HCT116 (cell line): ENCODE measurements at regions of chr12 and their contacts with region 1.

Region 1: GRCh38 chr12:47547085-47547484 is 158.7 kb downstream of the RPAP3 start:
- DNase-seq: no peak
- ATAC-seq: peak; percentile 82
- H3K4me3 ChIP-seq: no peak overlapping the region
- H3K27ac ChIP-seq: no peak overlapping the region
- H3K4me1 ChIP-seq: no peaks in the 10 kb centered on the region
- H3K27me3 ChIP-seq: no peaks in the 10 kb centered on the region
- CTCF ChIP-seq: peak; percentile 49 to 58 (median 57); a peak in 5 of 6 replicates
- POLR2A ChIP-seq: no peak
- RAD21 ChIP-seq: peak; percentile 64

Region 2: DNA sequence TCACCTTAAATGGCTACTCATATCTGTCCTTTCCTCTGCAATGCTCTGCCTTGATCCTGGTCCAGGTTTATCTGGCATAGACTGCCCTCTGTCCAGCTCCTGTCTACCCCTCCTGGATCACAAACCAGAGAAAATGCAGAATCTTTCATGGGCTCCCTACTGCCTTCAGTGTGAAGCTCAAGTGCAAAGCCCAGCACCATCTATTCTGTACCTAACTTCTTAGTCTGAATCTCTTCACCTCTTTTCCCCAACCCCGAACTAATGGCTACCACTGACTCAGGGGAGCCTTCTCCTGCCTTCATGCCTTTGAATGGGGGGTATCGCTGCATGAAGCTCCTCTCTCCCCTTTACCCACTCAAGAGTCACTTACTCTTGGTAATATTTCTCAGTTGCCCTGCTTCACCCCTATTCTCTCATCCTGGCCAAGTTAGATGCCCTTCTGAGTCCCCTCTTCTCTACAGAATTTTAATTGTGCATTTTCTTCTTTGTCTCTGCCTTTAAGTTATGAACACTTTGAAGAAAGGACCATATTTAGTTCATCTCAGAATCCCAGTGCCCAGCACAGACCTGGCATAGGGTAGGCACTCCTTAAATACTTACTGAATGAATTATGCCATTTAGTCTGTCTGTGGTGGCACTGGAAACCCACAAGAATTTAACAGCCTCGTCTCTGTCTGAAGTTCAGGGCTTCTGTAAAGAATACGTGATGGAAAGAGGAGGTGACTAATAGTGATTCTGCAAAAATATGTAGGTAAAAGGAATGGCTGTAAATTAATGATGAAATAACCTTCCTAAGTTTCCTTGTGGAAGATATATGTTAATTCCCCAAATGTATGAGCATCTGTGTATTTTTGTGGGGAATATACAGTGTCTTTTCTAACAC is 276.1 kb before region 1 on chr12:
- CTCF ChIA-PET with region 1: no interaction called
- POLR2A ChIA-PET with region 1: no interaction called
- RAD21 ChIA-PET with region 1: no interaction called
- intact Hi-C with region 1: no loop called
- DNase-seq: peak; percentile 84
- ATAC-seq: peak; percentile 95
- H3K4me3 ChIP-seq: peak overlapping the region in 1 of 2 experiments; percentile 1; a peak in 1 of 4 replicates
- H3K27ac ChIP-seq: peak overlapping the region; percentile 4; the same call in 1 of the 2 replicates
- H3K4me1 ChIP-seq: peaks cover 7 to 26% of the 10 kb centered on the region in 2 experiments
- H3K27me3 ChIP-seq: no peaks in the 10 kb centered on the region
- CTCF ChIP-seq: no peak
- POLR2A ChIP-seq: no peak
- RAD21 ChIP-seq: peak; percentile 30; the same call in 1 of the 2 replicates

Region 3: GRCh38 chr12:47527816-47528215 is 19.3 kb before region 1 on chr12:
- CTCF ChIA-PET with region 1: no interaction called
- POLR2A ChIA-PET with region 1: no interaction called
- RAD21 ChIA-PET with region 1: no interaction called
- intact Hi-C with region 1: loop called (anchors 2 kb)
- DNase-seq: no peak
- ATAC-seq: no peak
- H3K4me3 ChIP-seq: no peak overlapping the region
- H3K27ac ChIP-seq: no peak overlapping the region
- H3K4me1 ChIP-seq: no peaks in the 10 kb centered on the region
- H3K27me3 ChIP-seq: no peaks in the 10 kb centered on the region
- CTCF ChIP-seq: no peak
- POLR2A ChIP-seq: no peak
- RAD21 ChIP-seq: no peak

Region 4: GRCh38 chr12:47636908-47637780 is 90.1 kb after region 1 on chr12:
- CTCF ChIA-PET with region 1: interaction called, 20 read pairs
- POLR2A ChIA-PET with region 1: no interaction called
- RAD21 ChIA-PET with region 1: interaction called in 1 of 2 experiments, 3 read pairs
- intact Hi-C with region 1: no loop called
- DNase-seq: peak; percentile 69
- ATAC-seq: peak; percentile 98
- H3K4me3 ChIP-seq: no peak overlapping the region
- H3K27ac ChIP-seq: peak overlapping the region; percentile 52
- H3K4me1 ChIP-seq: peaks cover 7 to 12% of the 10 kb centered on the region in 2 experiments; a peak in 3 of 4 replicates
- H3K27me3 ChIP-seq: no peaks in the 10 kb centered on the region
- CTCF ChIP-seq: peak; percentile 62 to 88 (median 84)
- POLR2A ChIP-seq: no peak
- RAD21 ChIP-seq: peak; percentile 48; the same call in 1 of the 2 replicates

Region 5: DNA sequence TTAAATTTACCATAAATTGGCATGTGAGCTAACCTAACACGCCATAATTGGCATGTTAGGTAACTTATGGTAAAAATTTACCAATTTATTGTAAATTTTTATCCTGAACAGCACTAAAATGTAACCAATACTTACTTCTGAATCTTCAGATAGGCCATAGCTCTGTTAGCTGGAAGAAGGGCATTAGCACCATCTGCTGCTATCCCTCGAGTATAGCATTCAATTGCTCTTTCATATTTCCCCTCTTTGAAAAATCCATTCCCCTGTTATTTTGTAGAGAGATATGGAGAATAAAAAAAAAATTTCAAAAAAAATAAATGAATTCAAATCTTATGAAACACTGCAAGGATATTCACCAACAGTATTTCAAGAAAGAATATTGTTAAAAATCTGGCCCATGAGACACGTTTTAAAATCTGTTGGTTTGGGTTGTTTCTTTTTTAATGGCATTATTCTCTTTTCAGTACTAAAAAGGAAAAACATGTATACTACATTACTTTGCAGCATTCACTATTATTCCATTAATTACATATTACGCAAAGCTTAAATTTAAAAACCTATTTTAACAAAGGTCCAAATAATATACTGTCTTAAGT is 139.7 kb after region 1 on chr12:
- CTCF ChIA-PET with region 1: interaction called, 8 read pairs
- POLR2A ChIA-PET with region 1: interaction called, 3 read pairs
- RAD21 ChIA-PET with region 1: interaction called in 1 of 2 experiments, 3 read pairs
- intact Hi-C with region 1: loop called (anchors 5 kb)
- DNase-seq: peak; percentile 18
- ATAC-seq: peak; percentile 75
- H3K4me3 ChIP-seq: no peak overlapping the region
- H3K27ac ChIP-seq: no peak overlapping the region
- H3K4me1 ChIP-seq: no peaks in the 10 kb centered on the region
- H3K27me3 ChIP-seq: no peaks in the 10 kb centered on the region
- CTCF ChIP-seq: peak; percentile 62 to 66 (median 63); a peak in 5 of 6 replicates
- POLR2A ChIP-seq: no peak
- RAD21 ChIP-seq: peak; percentile 73

Region 6: GRCh38 chr12:47981496-47982260 is 434.6 kb after region 1 on chr12:
- CTCF ChIA-PET with region 1: no interaction called
- POLR2A ChIA-PET with region 1: no interaction called
- RAD21 ChIA-PET with region 1: no interaction called
- intact Hi-C with region 1: no loop called
- DNase-seq: no peak
- ATAC-seq: no peak
- H3K4me3 ChIP-seq: no peak overlapping the region
- H3K27ac ChIP-seq: no peak overlapping the region
- H3K4me1 ChIP-seq: no peaks in the 10 kb centered on the region
- H3K27me3 ChIP-seq: no peaks in the 10 kb centered on the region
- CTCF ChIP-seq: no peak
- POLR2A ChIP-seq: no peak
- RAD21 ChIP-seq: no peak